ENCODE measurements at regions of chrX and their contacts with region 1.

Region 1: GRCh38 chrX:154762523-154763289 is at the start of gene DKC1:
- DNase-seq: peak; percentile 85 to 95 (median 93)
- ATAC-seq: peak; percentile 94
- H3K4me3 ChIP-seq: peak within 1 kb of the TSS; percentile 61
- H3K4me3 Mint-ChIP-seq: peak within 1 kb of the TSS; percentile 85 to 92 (median 90)
- H3K27ac ChIP-seq: peak within 1 kb of the TSS; percentile 72
- H3K27ac Mint-ChIP-seq: peak within 1 kb of the TSS; percentile 89 to 97 (median 92)
- H3K4me1 ChIP-seq: peaks cover 9% of the 10 kb centered on the region in 2 donors
- H3K4me1 Mint-ChIP-seq: peaks cover 0 to 24% (median 18%) of the 10 kb centered on the region in 7 donors
- H3K27me3 ChIP-seq: no peaks in the 10 kb centered on the region
- H3K27me3 Mint-ChIP-seq: no peaks in the 10 kb centered on the region
- total RNA-seq, gene DKC1: 50.5 to 75.0 (median 66.5) TPM

Region 2: GRCh38 chrX:154734061-154734781 is 28.5 kb before region 1 on chrX:
- CTCF ChIA-PET with region 1: no interaction called
- POLR2A ChIA-PET with region 1: interaction called, 3 read pairs
- intact Hi-C with region 1: loop called in 1 of 2 experiments (anchors 1 kb)
- DNase-seq: peak in 4 of 9 donors; percentile 17 to 33 (median 28)
- ATAC-seq: peak; percentile 72
- H3K4me3 ChIP-seq: no peak overlapping the region
- H3K4me3 Mint-ChIP-seq: peak overlapping the region; percentile 34 to 87 (median 78)
- H3K27ac ChIP-seq: peak overlapping the region; percentile 40
- H3K27ac Mint-ChIP-seq: peak overlapping the region; percentile 81 to 95 (median 89)
- H3K4me1 ChIP-seq: peaks cover 43 to 75% of the 10 kb centered on the region in 2 donors
- H3K4me1 Mint-ChIP-seq: peaks cover 42 to 93% (median 89%) of the 10 kb centered on the region in 7 donors
- H3K27me3 ChIP-seq: no peaks in the 10 kb centered on the region
- H3K27me3 Mint-ChIP-seq: no peaks in the 10 kb centered on the region

Region 3: DNA sequence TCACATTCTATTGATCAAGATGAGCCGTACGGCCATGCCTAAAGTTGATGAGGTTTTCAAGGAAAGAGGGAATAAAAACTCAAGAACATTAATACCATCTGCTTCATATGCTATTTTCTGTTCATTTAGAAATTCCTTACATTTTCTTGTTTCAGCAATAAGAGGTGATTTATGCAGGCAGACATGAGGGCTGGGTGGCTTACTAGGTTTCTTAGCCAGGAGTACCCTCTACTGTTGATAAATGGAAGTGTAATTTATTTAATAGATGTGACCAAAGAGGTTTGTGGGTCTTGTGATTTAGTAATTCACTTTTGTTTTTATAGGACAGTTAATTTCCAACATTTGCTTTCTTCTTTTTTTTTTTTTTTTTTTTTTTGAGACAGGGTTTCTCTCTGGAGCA is 78.2 kb after region 1 on chrX:
- CTCF ChIA-PET with region 1: interaction called, 3 read pairs
- POLR2A ChIA-PET with region 1: no interaction called
- intact Hi-C with region 1: loop called in 1 of 2 experiments (anchors 1 kb)
- DNase-seq: peak in 7 of 9 donors; percentile 2 to 50 (median 34)
- ATAC-seq: peak; percentile 69
- H3K4me3 ChIP-seq: no peak overlapping the region
- H3K4me3 Mint-ChIP-seq: no peak overlapping the region
- H3K27ac ChIP-seq: no peak overlapping the region
- H3K27ac Mint-ChIP-seq: no peak overlapping the region
- H3K4me1 ChIP-seq: no peaks in the 10 kb centered on the region
- H3K4me1 Mint-ChIP-seq: peaks cover 0 to 11% (median 0%) of the 10 kb centered on the region in 7 donors
- H3K27me3 ChIP-seq: no peaks in the 10 kb centered on the region
- H3K27me3 Mint-ChIP-seq: peaks cover 0 to 6% (median 0%) of the 10 kb centered on the region in 5 donors

Region 4: DNA sequence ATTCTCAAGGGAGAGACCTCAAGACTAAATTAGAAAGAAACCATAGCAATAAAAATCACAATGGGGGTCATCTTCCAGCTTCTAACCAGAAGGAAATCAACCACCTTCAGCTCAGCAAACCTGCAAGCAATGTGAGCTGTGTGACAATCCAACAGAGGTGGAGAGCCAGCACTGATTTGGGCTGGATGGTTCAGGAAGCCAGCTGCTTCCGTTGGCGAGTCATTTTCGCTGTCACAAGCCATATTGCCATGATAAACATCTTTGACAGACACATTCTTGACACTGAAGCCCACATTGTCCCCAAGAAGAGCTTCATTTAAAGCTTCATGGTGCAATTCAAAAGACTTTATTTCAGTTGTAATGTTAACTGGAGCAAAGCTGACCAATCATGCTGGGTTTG is 146.1 kb after region 1 on chrX:
- CTCF ChIA-PET with region 1: no interaction called
- POLR2A ChIA-PET with region 1: no interaction called
- intact Hi-C with region 1: no loop called
- DNase-seq: no peak
- ATAC-seq: no peak
- H3K4me3 ChIP-seq: no peak overlapping the region
- H3K4me3 Mint-ChIP-seq: no peak overlapping the region
- H3K27ac ChIP-seq: no peak overlapping the region
- H3K27ac Mint-ChIP-seq: no peak overlapping the region
- H3K4me1 ChIP-seq: no peaks in the 10 kb centered on the region
- H3K4me1 Mint-ChIP-seq: no peaks in the 10 kb centered on the region
- H3K27me3 ChIP-seq: no peaks in the 10 kb centered on the region
- H3K27me3 Mint-ChIP-seq: peaks cover 0 to 22% (median 0%) of the 10 kb centered on the region in 5 donors